Right ventricle myocardium inferior (tissue), 1 donor: ENCODE measurements at regions of chr5 and their contacts with region 1.

Region 1: DNA sequence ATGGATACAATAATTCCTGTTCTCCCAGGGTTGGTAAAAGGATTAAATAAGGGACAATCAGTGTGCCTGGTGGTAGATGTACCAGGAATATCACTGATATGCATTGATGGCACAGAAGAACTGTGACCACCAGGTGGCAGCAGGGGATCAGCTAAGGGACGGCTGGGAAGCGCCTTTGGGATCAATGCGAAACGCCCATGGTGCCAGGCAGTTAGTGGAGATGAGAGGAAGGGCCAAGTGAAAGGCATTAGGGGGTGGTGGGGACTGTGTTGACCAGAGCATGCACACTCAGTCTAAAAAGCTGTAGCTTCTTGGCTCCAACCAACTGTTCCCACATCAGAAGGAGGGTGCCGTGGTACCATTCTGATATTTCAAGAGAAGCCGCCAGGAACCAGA is 55.6 kb downstream of the ARHGEF37 start:
- DNase-seq: no peak
- ATAC-seq: peak; percentile 67

Region 2: GRCh38 chr5:149345147-149345875 is 291.5 kb before region 1 on chr5 and contains the start of gene GRPEL2:
- intact Hi-C with region 1: no loop called
- DNase-seq: peak; percentile 98
- ATAC-seq: peak; percentile 98
- total RNA-seq, gene GRPEL2: 11.6 TPM

Region 3: DNA sequence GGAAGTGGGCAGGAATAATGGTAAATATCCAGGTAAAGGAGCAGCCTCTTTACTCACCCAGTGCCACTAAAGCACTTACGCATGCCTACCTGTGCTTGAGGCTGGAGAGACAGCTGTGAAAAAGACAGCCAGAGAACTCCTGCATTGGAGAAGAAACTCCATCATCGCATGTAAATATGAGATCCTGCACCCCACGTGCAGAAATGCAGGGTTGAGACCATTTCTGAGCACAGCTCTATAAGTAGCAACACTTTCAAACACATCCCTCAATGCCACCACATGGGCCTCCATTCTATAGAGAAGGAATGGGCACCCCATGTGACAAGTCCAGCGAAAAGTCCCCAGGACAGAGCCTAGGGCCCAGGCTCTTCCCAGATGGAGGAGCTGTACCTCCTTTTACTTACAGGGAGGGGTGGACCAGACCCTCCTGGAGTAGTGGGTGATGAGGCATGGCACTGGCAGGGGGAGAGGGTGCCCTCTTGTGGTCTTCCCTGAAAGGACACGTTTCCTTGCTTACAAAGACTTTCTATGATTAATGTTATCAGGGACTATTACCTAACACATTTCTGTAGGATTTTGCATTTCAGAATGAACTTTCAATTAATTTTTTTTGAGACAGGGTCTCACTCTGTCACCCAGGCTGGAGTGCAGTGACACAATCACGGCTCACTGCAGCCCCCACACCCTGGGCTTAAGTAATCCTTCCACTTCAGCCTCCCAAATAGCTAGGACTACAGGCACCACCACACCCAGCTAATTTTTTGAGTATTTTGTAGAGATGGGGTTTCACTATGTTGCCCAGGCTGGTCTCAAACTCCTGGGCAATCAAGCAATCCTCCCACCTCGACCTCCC is 202.5 kb before region 1 on chr5:
- intact Hi-C with region 1: no loop called
- DNase-seq: peak; percentile 69
- ATAC-seq: peak; percentile 27

Region 4: GRCh38 chr5:149852641-149853330 is 215.9 kb after region 1 on chr5:
- intact Hi-C with region 1: loop called (anchors 2 kb)
- DNase-seq: no peak
- ATAC-seq: peak; percentile 49

Region 5: GRCh38 chr5:149960272-149961185 is 323.7 kb after region 1 on chr5 and contains the start of gene SLC26A2:
- intact Hi-C with region 1: loop called (anchors 2 kb)
- DNase-seq: peak; percentile 98
- ATAC-seq: peak; percentile 100
- total RNA-seq, gene SLC26A2: 4.3 TPM

Region 6: GRCh38 chr5:149990518-149991376 is 353.9 kb after region 1 on chr5:
- intact Hi-C with region 1: loop called (anchors 1 kb)
- DNase-seq: no peak
- ATAC-seq: peak; percentile 67